H1 (cell line): ENCODE measurements at regions of chr20 and their contacts with region 1.

Region 1: DNA sequence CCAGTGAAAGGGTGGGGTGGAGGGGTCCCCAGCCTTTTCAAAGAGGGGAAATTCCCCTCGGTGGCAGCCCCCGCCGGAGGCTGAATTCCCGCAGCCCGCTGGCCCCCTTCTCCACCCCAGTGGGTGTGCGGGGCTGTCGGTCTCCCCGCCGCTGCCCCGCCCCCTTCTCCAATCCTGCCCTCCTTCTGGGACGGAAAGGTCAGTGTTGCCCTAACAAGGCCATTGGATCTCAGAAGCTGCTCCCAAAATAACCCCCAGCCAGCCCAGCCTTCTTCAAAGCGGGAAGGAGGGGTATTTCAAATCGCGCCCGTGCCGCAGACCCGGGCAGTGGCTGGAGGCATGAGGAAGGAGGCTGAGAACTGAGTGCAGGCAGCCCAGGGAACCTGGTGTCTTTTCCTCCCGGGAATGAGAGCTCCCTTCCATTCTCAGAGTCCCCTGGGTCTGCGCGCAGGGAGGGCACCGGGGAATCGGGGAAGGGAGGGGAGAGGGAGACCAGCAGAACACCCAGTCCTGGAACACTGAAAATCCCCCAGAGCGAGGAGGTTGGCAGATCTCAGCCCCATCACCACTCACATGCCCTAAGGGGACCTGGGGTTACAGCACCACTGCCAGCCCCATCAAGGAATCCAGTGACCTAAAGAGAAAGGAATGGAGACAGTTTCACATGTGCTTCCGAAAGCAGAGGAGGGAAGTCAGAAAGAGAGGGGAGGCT is at the start of gene JPH2:
- DNase-seq: peak in 1 of 2 experiments; percentile 77
- H3K4me3 ChIP-seq: peak within 1 kb of the TSS; percentile 27 to 66 (median 46)
- H3K27ac ChIP-seq: no peak within 1 kb of the TSS
- H3K4me1 ChIP-seq: peaks cover 0 to 13% (median 6%) of the 10 kb centered on the region in 4 experiments; a peak in 5 of 7 replicates
- H3K27me3 ChIP-seq: peaks cover 0 to 4% (median 1%) of the 10 kb centered on the region in 4 experiments; a peak in 2 of 7 replicates
- CTCF ChIP-seq: no peak
- EP300 ChIP-seq: no peak
- POLR2A ChIP-seq: no peak; a peak in 1 of 3 replicates
- RAD21 ChIP-seq: no peak
- total RNA-seq, gene JPH2: 1.3 and 1.5 TPM in 2 replicates

Region 2: GRCh38 chr20:44104798-44105517 is 82.2 kb before region 1 on chr20:
- CTCF ChIA-PET with region 1: interaction called, 512 read pairs
- POLR2A ChIA-PET with region 1: no interaction called
- DNase-seq: no peak
- H3K4me3 ChIP-seq: no peak overlapping the region
- H3K27ac ChIP-seq: no peak overlapping the region
- H3K4me1 ChIP-seq: no peaks in the 10 kb centered on the region
- H3K27me3 ChIP-seq: no peaks in the 10 kb centered on the region
- CTCF ChIP-seq: no peak
- EP300 ChIP-seq: no peak
- POLR2A ChIP-seq: no peak
- RAD21 ChIP-seq: no peak

Region 3: GRCh38 chr20:44137210-44137801 is 49.9 kb before region 1 on chr20:
- CTCF ChIA-PET with region 1: interaction called, 45 read pairs
- POLR2A ChIA-PET with region 1: interaction called, 5 read pairs
- DNase-seq: peak; percentile 25 to 55
- H3K4me3 ChIP-seq: peak overlapping the region in 1 of 4 experiments; percentile 31; a peak in 1 of 8 replicates
- H3K27ac ChIP-seq: 0 out of 2 replicates have a peak overlapping the region, but pooled peaks have one; percentile 28
- H3K4me1 ChIP-seq: peaks cover 0 to 4% (median 2%) of the 10 kb centered on the region in 4 experiments; a peak in 3 of 7 replicates
- H3K27me3 ChIP-seq: no peaks in the 10 kb centered on the region
- CTCF ChIP-seq: no peak
- EP300 ChIP-seq: no peak
- POLR2A ChIP-seq: no peak
- RAD21 ChIP-seq: no peak

Region 4: GRCh38 chr20:44153636-44154043 is 33.6 kb before region 1 on chr20:
- CTCF ChIA-PET with region 1: interaction called, 14 read pairs
- POLR2A ChIA-PET with region 1: interaction called, 4 read pairs
- DNase-seq: no peak
- H3K4me3 ChIP-seq: no peak overlapping the region
- H3K27ac ChIP-seq: no peak overlapping the region
- H3K4me1 ChIP-seq: no peaks in the 10 kb centered on the region; a peak in 1 of 7 replicates
- H3K27me3 ChIP-seq: no peaks in the 10 kb centered on the region
- CTCF ChIP-seq: no peak
- EP300 ChIP-seq: no peak
- POLR2A ChIP-seq: no peak
- RAD21 ChIP-seq: no peak

Region 5: GRCh38 chr20:44247586-44248409 is 60.6 kb after region 1 on chr20:
- CTCF ChIA-PET with region 1: no interaction called
- POLR2A ChIA-PET with region 1: no interaction called
- DNase-seq: peak; percentile 63 to 96
- H3K4me3 ChIP-seq: peak overlapping the region; percentile 77 to 93 (median 84)
- H3K27ac ChIP-seq: no peak overlapping the region
- H3K4me1 ChIP-seq: peaks cover 0 to 5% (median 0%) of the 10 kb centered on the region in 4 experiments; a peak in 4 of 7 replicates
- H3K27me3 ChIP-seq: no peaks in the 10 kb centered on the region
- CTCF ChIP-seq: peak; percentile 85 to 99 (median 97)
- EP300 ChIP-seq: peak in 1 of 2 experiments; percentile 18; a peak in 1 of 3 replicates
- POLR2A ChIP-seq: no peak
- RAD21 ChIP-seq: peak; percentile 49 to 61